Calu3 (cell line): ENCODE measurements at regions of chr4 and their contacts with region 1.

Region 1: DNA sequence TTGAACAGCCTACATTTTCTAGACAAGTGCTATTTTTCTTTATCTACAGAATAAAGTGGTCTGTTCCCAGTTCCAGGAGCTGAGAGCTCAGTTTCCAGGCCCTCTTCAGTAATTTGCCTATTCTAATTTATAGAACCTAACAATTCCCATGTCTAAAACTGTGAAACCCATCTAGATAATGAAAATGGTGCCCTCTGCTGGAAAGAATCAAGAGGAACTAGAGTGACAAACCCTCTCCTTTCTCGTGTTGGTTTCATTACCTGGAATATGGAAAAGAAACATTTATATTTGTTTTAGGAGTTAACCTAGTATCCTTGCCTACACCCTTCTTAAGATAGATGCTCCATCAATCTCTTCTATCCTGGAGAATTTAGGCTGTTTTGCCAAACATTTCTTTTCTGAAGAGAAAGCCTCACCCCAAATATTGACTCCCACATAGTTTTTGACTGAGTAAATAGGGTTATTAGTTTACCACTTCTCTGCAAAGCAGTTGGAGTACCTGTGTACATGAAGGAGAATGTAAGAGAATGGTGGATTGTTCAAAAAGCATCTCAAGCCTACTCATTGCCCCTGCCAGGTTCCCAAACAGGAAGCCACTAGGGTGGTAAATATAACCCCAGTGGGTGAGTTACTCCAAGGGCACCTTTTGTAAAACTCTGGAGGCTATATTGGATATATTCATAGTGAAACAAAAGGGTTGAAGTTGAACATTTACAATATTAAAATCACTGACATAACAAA is 121.6 kb downstream of the RASL11B start:
- DNase-seq: peak; percentile 20
- H3K4me3 Mint-ChIP-seq: no peak overlapping the region
- H3K27ac Mint-ChIP-seq: no peak overlapping the region
- H3K4me1 Mint-ChIP-seq: no peaks in the 10 kb centered on the region
- H3K27me3 Mint-ChIP-seq: no peaks in the 10 kb centered on the region
- CTCF ChIP-seq: peak; percentile 48

Region 2: DNA sequence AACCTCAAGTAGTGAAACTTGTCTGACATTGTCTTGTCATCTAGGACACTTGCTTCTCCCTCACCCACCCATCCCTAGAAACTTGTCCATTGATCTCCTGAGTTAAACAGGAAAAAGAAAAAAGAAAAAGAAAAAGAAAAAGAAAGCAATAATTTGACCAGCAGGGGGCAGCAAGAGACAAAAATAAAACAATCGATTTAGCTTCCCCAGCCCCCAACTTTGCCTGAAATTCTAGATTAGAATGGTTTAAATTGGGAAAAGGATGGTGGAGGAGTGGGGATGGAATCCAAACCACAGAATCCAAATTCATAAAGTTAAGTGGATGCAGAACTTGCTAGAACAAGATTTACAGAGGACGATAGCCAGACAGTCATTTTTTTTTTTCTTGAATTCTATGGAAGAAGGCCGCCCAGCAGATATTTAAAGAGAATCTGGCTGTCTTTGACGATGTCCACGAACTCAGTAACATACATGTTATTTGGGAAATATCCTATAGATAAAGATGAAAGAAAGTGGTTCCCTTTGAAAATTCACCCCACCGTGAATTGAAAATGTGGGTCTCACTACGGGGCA is 607.5 kb before region 1 on chr4:
- CTCF ChIA-PET with region 1: interaction called, 6 read pairs
- intact Hi-C with region 1: loop called (anchors 2 kb)
- DNase-seq: peak; percentile 14
- H3K4me3 Mint-ChIP-seq: no peak overlapping the region
- H3K27ac Mint-ChIP-seq: no peak overlapping the region
- H3K4me1 Mint-ChIP-seq: no peaks in the 10 kb centered on the region
- H3K27me3 Mint-ChIP-seq: peaks cover 48% of the 10 kb centered on the region
- CTCF ChIP-seq: peak; percentile 40

Region 3: DNA sequence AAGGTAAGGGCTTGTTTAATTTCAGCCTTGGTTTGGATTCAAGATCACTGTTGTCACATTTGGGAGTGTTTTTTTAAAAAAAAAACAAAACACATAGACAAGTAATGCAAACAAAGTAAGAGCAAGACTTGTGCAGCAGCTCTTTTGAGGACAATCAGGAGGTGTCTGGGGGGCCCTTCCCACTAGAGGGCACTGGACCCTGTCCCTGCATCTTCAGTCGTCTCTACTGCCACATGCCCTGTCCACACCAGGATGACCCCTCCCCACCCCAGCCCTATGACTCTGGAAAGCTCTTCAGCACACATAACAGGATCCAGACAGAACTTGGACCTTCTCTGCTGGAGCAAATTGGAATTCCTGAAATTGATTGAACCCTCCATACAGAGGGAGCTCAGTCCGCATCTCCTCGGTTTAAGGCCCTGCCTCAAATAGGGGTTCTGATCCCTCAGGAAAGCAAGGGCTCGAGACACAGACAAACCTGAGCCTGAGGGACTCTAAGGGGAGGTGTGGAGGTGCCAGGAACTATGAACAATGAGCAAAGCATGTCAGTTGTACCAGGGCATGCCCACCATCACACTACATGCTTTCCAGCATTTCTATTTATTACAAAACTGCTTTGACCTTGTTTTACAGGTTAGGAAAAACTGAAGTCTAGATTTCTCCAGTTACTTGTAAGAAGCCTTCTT is 395.5 kb before region 1 on chr4:
- CTCF ChIA-PET with region 1: interaction called, 13 read pairs
- intact Hi-C with region 1: loop called (anchors 2 kb)
- DNase-seq: peak; percentile 21
- H3K4me3 Mint-ChIP-seq: no peak overlapping the region
- H3K27ac Mint-ChIP-seq: no peak overlapping the region
- H3K4me1 Mint-ChIP-seq: no peaks in the 10 kb centered on the region
- H3K27me3 Mint-ChIP-seq: no peaks in the 10 kb centered on the region
- CTCF ChIP-seq: peak; percentile 26

Region 4: DNA sequence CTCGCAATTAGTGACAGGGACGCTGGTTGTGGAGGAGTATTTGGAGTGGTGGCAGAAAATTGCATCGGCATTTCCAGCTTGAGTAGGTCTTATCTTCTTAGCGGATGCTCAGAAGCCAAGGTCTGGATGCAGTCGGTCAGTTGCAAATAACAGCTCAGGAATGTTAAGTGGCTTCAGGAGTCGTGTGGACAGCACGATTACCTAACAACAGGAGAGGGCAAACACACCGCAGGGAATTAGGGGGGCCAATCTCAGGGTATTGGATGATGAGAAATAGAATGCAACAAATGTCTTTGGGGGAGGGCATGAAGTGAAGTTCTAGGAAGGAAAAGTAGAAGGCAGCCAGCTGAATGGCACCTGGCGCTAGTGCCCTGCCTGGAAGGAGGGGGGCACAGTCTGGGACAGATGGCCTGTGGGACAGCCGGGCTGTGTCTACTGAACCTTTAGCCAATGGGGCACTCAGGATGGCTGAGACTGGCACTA is 109.8 kb before region 1 on chr4:
- CTCF ChIA-PET with region 1: no interaction called
- intact Hi-C with region 1: loop called (anchors 5 kb)
- DNase-seq: no peak
- H3K4me3 Mint-ChIP-seq: no peak overlapping the region
- H3K27ac Mint-ChIP-seq: peak overlapping the region; percentile 18
- H3K4me1 Mint-ChIP-seq: peaks cover 19% of the 10 kb centered on the region
- H3K27me3 Mint-ChIP-seq: no peaks in the 10 kb centered on the region
- CTCF ChIP-seq: no peak

Region 5: GRCh38 chr4:54233277-54233696 is 1249.6 kb after region 1 on chr4:
- CTCF ChIA-PET with region 1: no interaction called
- intact Hi-C with region 1: loop called (anchors 5 kb)
- DNase-seq: peak; percentile 86
- H3K4me3 Mint-ChIP-seq: peak overlapping the region; percentile 76
- H3K27ac Mint-ChIP-seq: no peak overlapping the region
- H3K4me1 Mint-ChIP-seq: peaks cover 18% of the 10 kb centered on the region
- H3K27me3 Mint-ChIP-seq: peaks cover 53% of the 10 kb centered on the region
- CTCF ChIP-seq: peak; percentile 40